A673 (cell line): ENCODE measurements at regions of chr13 and their contacts with region 1.

Region 1: GRCh38 chr13:33182729-33183128 is 102.8 kb downstream of the STARD13 start:
- DNase-seq: no peak
- H3K4me3 ChIP-seq: no peak overlapping the region
- H3K27ac ChIP-seq: peak overlapping the region; percentile 98
- H3K4me1 ChIP-seq: peaks cover 96% of the 10 kb centered on the region
- H3K27me3 ChIP-seq: no peaks in the 10 kb centered on the region
- CTCF ChIP-seq: no peak

Region 2: DNA sequence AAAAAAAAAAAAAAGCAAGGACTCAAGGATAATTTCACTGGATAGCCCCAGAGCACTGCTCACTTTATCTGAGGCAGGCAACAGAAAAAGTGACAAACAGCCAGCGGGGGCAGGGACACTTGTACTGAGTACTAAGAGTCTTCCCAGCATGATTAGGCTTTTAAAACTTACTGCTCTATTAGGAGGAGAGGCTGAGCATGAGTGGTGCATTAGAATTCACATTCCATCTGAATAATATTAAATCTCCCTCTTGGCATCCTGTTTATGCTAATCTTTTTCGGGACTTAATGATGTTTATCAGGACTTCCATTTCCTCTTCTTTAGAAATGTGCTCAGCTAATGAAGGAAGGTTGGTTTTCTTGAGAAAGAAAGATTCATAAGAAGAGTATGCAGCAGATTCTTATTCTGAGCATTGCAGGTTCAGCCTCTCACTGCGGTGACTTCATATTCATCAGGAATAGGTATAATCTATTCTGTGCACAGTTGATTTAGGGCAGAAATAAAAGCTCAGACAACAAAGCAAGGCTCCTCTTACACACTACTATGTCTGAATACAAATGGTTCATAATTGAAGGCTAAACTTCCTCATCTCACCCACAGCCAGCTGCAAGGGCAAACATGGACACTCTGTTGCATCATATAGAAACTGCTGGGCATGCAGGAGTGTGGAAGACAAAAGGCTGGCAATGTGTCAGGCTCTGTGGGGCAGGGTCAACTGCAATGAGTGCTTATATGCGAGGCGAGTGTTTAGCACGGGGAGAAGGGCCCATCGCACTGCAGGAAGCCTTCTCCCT is 59.5 kb before region 1 on chr13:
- CTCF ChIA-PET with region 1: no interaction called
- POLR2A ChIA-PET with region 1: no interaction called
- intact Hi-C with region 1: loop called (anchors 1 kb)
- DNase-seq: peak; percentile 98
- H3K4me3 ChIP-seq: no peak overlapping the region
- H3K27ac ChIP-seq: peak overlapping the region; percentile 98
- H3K4me1 ChIP-seq: peaks cover 74% of the 10 kb centered on the region
- H3K27me3 ChIP-seq: no peaks in the 10 kb centered on the region
- CTCF ChIP-seq: no peak

Region 3: GRCh38 chr13:33438918-33439317 is 256.2 kb after region 1 on chr13:
- CTCF ChIA-PET with region 1: no interaction called
- POLR2A ChIA-PET with region 1: no interaction called
- intact Hi-C with region 1: loop called (anchors 1 kb)
- DNase-seq: no peak
- H3K4me3 ChIP-seq: no peak overlapping the region
- H3K27ac ChIP-seq: peak overlapping the region; percentile 96
- H3K4me1 ChIP-seq: peaks cover 47% of the 10 kb centered on the region
- H3K27me3 ChIP-seq: no peaks in the 10 kb centered on the region
- CTCF ChIP-seq: no peak

Region 4: GRCh38 chr13:33524086-33524485 is 341.4 kb after region 1 on chr13:
- CTCF ChIA-PET with region 1: no interaction called
- POLR2A ChIA-PET with region 1: no interaction called
- intact Hi-C with region 1: no loop called
- DNase-seq: no peak
- H3K4me3 ChIP-seq: no peak overlapping the region
- H3K27ac ChIP-seq: no peak overlapping the region
- H3K4me1 ChIP-seq: peaks cover 39% of the 10 kb centered on the region
- H3K27me3 ChIP-seq: no peaks in the 10 kb centered on the region
- CTCF ChIP-seq: no peak